ENCODE measurements at regions of chr17 and their contacts with region 1.

Region 1: DNA sequence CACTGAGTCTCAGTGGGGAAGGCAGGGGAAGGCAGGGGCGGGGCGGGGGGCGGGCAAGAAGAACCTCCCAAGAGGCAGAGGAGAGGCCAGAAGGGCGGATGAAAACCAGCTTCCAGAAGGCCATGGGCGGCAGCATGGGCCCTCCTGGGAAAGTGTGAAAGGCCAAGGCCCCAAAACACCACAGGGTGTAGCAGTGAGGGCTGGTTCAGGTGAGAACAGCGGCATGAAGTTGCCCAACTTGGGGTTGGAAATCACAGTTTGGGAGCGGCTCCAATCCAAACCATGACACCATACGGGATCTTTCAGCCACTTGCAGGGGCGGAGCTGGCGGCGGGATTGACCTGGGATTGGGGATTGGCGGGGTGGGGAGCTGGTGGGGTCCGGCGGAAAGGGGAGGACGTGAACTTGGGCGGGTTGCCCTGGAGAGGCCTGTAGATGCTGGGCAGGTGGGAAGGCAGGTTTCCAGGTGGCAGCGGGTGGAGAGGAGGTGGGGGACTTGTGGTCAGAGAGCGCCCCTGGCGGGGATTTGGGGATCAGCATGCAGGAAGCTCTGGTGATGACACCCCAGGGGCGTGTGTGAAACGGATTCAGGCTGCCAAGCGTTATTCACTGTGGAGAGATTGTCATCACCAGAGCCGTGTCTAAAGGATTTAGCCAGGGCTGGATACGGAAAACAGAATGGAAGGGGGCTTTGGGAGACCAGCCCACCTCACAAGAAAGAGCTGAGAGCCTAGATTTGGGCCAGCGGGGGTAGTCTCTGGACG is 80.9 kb downstream of the ARHGAP23 start:
- DNase-seq: peak; percentile 97
- ATAC-seq: peak; percentile 69
- H3K4me3 Mint-ChIP-seq: peak overlapping the region; percentile 79
- H3K27ac Mint-ChIP-seq: no peak overlapping the region
- H3K4me1 Mint-ChIP-seq: peaks cover 33% of the 10 kb centered on the region
- H3K27me3 Mint-ChIP-seq: peaks cover 33% of the 10 kb centered on the region
- CTCF ChIP-seq: peak; percentile 93

Region 2: DNA sequence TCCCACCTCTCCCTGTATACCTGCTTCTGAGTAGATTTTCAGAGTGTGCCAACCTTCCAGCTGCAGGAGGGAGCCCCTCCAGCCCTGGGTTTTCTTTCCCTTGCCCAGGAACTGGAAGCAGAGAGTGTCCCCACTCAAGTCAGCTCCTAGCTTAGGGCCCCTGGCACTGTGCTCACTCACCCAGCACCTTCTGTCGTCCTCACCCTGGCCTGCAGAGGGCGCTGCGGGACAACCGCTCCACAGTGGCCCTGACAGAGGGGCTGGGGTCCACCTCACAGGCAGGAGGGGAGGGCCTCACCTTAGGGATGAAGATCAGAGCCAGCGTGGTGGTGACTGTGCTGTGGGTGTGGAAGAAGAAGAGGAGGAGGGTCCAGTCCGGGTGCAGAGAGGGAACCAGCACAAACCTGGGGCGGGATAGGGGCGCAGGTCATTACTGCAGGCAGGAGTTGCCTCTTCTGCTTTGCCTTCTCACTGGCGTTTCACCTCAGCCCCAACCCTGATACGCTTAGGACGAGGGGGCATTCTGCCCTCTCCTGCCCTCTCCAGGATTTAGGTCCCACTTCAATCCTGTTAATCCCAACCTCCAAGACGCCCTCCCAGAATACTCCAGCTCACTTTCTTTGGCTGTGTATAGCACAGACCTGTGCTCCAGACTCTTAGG is 175.4 kb before region 1 on chr17:
- CTCF ChIA-PET with region 1: interaction called, 15 read pairs
- POLR2A ChIA-PET with region 1: no interaction called
- DNase-seq: peak; percentile 96
- ATAC-seq: peak; percentile 92
- H3K4me3 Mint-ChIP-seq: no peak overlapping the region
- H3K27ac Mint-ChIP-seq: no peak overlapping the region; the same call in 1 of the 2 replicates
- H3K4me1 Mint-ChIP-seq: peaks cover 16% of the 10 kb centered on the region
- H3K27me3 Mint-ChIP-seq: no peaks in the 10 kb centered on the region; the same call in 1 of the 2 replicates
- CTCF ChIP-seq: peak; percentile 95

Region 3: DNA sequence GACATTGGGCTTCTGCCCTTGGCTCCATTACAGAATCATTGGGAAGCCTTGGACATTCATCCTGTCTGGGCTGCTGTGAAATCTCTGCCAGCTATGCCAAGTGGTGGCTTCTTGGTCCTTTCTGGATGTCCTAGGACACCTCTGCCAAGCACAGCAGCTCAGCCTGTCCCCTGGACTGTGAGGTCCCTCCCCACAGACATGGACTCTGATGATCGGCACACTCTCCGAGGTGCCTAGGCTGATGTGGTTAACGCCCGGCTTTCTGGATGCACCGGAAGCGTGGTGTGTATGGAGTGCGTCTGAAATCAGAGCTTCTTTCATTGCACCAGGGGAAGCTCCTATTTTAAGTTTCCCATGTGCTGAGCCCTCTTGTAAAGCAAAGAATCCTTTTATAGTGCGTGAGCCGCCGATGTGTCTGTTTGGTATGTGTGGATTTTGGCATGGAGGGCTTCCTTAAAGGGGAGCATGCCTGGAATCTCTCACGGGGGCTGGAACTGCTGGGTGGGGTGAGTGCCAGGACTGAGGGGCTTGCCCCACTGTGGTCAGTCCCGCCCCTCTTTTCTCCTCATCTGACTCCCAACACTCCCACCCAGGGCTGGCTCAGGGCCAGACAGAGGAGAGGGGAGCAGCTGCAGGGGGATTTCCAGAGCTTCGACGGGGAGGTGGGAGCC is 87.9 kb before region 1 on chr17:
- CTCF ChIA-PET with region 1: interaction called, 22 read pairs
- POLR2A ChIA-PET with region 1: interaction called, 8 read pairs
- DNase-seq: no peak
- ATAC-seq: no peak; the same call in 1 of the 2 replicates
- H3K4me3 Mint-ChIP-seq: peak overlapping the region; percentile 22
- H3K27ac Mint-ChIP-seq: no peak overlapping the region
- H3K4me1 Mint-ChIP-seq: peaks cover 70% of the 10 kb centered on the region
- H3K27me3 Mint-ChIP-seq: peaks cover 38% of the 10 kb centered on the region
- CTCF ChIP-seq: no peak

Region 4: GRCh38 chr17:38544839-38545209 is 35.6 kb after region 1 on chr17:
- CTCF ChIA-PET with region 1: interaction called, 22 read pairs
- POLR2A ChIA-PET with region 1: interaction called, 6 read pairs
- DNase-seq: peak; percentile 43
- ATAC-seq: peak; percentile 20; the same call in 1 of the 2 replicates
- H3K4me3 Mint-ChIP-seq: no peak overlapping the region
- H3K27ac Mint-ChIP-seq: no peak overlapping the region
- H3K4me1 Mint-ChIP-seq: peaks cover 18% of the 10 kb centered on the region
- H3K27me3 Mint-ChIP-seq: peaks cover 2% of the 10 kb centered on the region; the same call in 1 of the 2 replicates
- CTCF ChIP-seq: no peak

Region 5: DNA sequence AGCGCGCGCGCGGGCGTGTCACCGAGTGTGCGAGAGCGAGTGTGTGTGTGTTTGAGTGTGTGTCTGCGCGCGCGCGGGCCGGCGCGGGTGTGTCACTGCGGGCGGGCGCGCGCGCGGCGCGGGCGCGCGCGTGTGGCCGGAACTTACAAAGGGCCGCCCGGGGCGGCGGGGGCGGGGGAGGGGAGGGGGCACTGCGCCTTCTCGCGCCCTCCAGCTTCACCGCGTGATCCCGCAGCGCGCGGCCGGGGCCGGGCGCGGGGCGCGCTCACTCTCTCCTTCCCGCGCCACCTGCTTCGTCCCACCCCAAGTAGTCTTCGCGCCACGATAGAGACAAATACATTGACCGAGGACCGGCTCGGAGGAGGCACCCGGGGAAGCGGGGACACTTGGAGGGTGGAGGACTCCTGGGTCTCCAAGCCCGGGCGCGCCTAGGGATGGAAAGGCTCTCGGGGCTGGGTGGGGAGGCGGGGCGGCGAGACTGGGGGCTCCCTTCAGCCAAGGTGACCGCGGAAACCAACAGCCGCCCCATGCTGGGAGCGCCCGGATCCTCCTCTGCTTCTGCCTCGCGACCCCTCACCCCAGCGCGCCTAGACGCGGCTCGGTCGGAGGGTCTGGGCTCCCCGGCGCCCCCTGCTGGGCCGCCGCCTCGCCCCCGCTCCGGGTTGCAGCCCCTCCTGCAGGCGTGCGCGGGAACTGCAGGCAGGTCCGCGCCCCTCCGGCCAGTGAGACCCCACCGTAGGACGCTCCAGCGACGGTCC is 96.9 kb after region 1 on chr17 and contains the start of gene SRCIN1:
- CTCF ChIA-PET with region 1: interaction called, 19 read pairs
- POLR2A ChIA-PET with region 1: no interaction called
- DNase-seq: peak; percentile 74
- ATAC-seq: peak; percentile 5
- H3K4me3 Mint-ChIP-seq: peak within 1 kb of the TSS; percentile 71
- H3K27ac Mint-ChIP-seq: no peak within 1 kb of the TSS
- H3K4me1 Mint-ChIP-seq: peaks cover 72% of the 10 kb centered on the region
- H3K27me3 Mint-ChIP-seq: peaks cover 44% of the 10 kb centered on the region
- CTCF ChIP-seq: peak; percentile 99
- total RNA-seq, gene SRCIN1: 10.7 to 17.3 TPM (median 11.1 TPM) in 3 replicates

Region 6: DNA sequence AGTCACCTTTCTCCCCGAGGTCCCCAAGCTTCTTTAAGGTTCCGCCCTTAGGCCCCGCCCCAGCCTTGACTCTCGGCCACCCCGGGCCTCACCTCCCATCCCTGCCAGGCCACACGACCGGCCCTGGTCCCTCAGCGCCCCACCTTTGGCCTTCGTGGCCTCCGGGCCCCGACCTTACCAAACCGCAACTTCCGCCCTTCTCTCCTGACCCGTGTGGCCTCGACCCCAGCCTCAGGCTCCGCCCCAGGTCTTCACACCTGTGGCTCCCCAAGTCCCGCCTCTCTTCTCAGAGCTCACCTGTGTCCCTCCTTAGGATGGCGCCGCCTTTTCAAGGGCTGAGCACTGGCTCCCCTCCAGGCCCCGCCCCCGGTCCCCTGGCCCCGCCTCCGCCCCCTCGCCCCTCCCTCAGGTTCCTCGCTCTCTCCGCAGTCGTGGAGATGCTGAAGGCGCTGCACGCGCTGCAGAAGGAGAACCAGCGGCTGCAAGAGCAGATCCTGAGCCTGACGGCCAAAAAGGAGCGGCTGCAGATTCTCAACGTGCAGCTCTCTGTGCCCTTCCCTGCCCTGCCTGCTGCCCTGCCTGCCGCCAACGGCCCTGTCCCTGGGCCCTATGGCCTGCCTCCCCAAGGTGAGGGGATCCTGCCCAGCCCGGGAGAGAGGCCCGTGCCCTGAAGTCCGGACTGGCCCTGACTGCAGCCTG is 210.9 kb after region 1 on chr17:
- CTCF ChIA-PET with region 1: interaction called, 12 read pairs
- POLR2A ChIA-PET with region 1: no interaction called
- DNase-seq: peak; percentile 85
- ATAC-seq: peak; percentile 69
- H3K4me3 Mint-ChIP-seq: peak overlapping the region; percentile 54
- H3K27ac Mint-ChIP-seq: no peak overlapping the region
- H3K4me1 Mint-ChIP-seq: peaks cover 39% of the 10 kb centered on the region
- H3K27me3 Mint-ChIP-seq: peaks cover 12% of the 10 kb centered on the region
- CTCF ChIP-seq: no peak

Measured in WTC11 (cell line).